ENCODE measurements at regions of chr1 and their contacts with region 1.

Region 1: DNA sequence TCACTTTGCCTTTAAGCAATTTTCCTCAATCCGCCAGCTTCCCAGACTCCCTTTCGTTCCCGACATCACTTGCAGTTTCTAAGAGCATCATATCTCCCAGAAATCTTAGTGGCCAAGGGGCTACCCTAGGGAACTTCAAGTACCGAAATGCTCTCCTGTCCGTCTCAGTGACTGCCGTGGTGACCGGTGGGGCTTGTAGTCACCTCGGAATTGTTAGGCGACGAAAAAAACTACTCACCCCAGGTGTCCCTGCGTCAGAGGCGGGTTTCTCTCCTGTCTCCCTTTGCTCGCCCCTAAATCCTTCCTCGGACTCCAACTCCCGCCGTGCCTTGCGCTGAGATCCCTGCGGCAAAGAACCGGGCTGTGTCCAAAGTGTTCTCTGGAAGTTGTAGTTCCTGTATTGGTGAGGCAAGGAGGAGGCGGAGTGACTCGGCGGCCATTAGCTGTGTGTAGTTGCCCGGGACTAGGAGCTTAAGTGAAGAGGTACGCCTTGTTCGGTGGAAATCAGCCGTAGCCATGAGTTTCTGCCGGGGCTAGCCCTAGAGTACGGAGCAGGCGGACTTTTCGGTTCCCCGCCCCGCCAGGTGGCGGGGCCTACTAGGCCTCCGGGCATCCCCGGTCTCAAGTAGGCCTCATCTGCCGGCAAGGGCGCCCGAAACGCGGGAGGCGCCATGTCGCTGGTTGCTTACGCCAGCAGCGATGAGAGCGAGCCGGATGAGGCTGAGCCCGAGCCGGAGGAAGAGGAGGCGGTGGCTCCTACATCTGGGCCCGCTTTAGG is at the start of gene PRCC:
- DNase-seq: peak; percentile 99
- ATAC-seq: peak; percentile 94
- H3K4me3 Mint-ChIP-seq: no peak within 1 kb of the TSS
- H3K27ac Mint-ChIP-seq: no peak within 1 kb of the TSS
- H3K4me1 Mint-ChIP-seq: peaks cover 34% of the 10 kb centered on the region
- H3K27me3 Mint-ChIP-seq: no peaks in the 10 kb centered on the region
- CTCF ChIP-seq: no peak
- total RNA-seq, gene PRCC: 69.8 to 70.6 TPM

Region 2: DNA sequence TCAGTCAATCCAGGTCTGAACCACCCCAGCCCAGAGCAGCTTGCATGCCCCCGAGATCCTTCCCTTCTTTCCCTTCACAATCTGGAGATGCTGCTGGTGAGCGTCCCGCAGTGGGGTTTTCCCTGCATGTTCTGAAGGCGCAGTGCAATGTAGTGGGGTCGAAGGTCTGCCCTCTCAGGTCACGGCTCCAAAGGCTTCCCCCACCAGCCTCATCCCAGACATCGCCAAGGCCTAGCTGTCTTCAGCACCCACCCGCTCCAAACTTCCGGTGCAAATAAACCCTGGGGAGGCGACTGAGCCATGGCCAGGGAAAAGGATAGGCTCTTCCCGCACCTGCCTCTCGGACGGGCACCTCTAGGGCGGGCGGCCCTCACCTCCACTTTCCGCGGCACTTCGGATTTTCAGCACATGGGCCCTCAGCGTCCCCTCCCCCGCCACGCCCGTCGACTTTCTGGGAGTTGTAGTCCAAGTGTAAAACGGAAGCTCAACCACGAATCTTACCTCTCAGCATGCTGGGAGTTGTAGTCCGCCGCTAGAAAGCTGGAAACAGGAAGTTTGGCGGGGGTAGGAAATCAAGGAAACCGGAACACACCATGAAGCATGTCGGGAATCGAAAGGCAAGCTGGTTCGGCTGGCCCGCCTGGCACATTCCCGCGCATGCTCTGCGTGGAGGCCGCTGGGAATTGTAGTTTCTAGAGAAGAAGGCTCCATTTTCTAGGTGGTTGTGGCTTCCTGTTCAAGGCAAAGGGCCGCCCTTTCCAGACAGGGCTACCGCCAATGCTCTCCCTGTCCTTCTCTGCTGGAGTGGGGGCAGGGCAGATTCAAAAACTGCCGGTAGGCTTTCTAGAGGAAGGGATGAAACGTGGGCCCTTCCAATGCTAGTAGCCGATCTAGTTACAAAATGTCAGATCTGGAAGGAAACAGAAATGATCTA is 26.3 kb before region 1 on chr1 and contains the start of gene MRPL24:
- CTCF ChIA-PET with region 1: interaction called, 3 read pairs
- POLR2A ChIA-PET with region 1: interaction called, 19 read pairs
- intact Hi-C with region 1: loop called (anchors 1 kb)
- DNase-seq: peak; percentile 99
- ATAC-seq: peak; percentile 89
- H3K4me3 Mint-ChIP-seq: peak within 1 kb of the TSS; percentile 98
- H3K27ac Mint-ChIP-seq: peak within 1 kb of the TSS; percentile 95
- H3K4me1 Mint-ChIP-seq: peaks cover 50% of the 10 kb centered on the region
- H3K27me3 Mint-ChIP-seq: no peaks in the 10 kb centered on the region
- CTCF ChIP-seq: no peak
- total RNA-seq, gene MRPL24: 84.2 to 93.6 TPM

Measured in activated CD8-positive, alpha-beta T cell treated with anti-CD3 and anti-CD28 coated beads for 36 hours (primary cell).